Posterior vena cava (tissue), 2 donors: ENCODE measurements at regions of chr3 and their contacts with region 1.

Region 1: DNA sequence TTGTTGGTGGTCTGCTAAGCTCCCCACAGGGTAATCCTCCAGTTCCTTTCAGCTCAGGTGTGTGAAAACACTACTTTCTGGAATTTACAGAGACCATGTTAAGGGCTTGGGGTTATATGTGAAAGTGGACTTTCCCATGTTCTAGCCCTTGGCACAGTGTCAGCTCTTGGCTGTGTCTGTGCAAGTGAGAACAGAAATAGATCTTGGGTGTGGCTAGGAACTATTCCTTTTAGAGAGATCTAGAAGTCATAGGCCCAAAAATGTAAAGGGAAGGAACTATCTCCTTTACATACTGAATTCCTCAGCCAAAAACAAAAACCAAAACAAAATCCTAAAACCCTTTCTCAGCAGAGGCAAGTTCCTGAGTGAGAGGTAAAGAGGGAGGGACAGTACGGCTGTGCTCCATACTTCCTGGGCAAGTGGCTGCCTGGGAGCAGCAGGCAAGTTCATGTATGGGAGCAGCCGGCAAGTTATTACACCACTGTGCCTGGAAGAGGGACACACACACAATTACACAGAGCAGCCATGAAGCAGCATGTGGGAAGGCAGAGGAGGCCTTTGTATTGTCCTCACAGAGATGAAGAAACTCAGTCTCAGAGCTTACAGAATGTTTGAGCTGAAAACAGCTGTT is 19.9 kb upstream of the C3orf62 start:
- DNase-seq: peak; percentile 85

Region 2: GRCh38 chr3:49199239-49199899 is 97.5 kb before region 1 on chr3:
- intact Hi-C with region 1: no loop called
- DNase-seq: peak; percentile 98

Region 3: GRCh38 chr3:49276475-49277382 is 20.2 kb before region 1 on chr3 and contains the start of gene C3orf62:
- intact Hi-C with region 1: loop called in 1 of 2 experiments (anchors 1 kb)
- DNase-seq: peak; percentile 97
- total RNA-seq, gene C3orf62: 2.6 to 3.3 TPM